IMR-90 (cell line): ENCODE measurements at regions of chr9 and their contacts with region 1.

Region 1: GRCh38 chr9:917730-918129 is 58.7 kb upstream of the DMRT3 start:
- DNase-seq: no peak
- ATAC-seq: no peak
- H3K4me3 ChIP-seq: no peak overlapping the region
- H3K27ac ChIP-seq: no peak overlapping the region
- H3K4me1 ChIP-seq: no peaks in the 10 kb centered on the region
- H3K27me3 ChIP-seq: no peaks in the 10 kb centered on the region
- CTCF ChIP-seq: no peak
- POLR2A ChIP-seq: no peak
- RAD21 ChIP-seq: no peak

Region 2: DNA sequence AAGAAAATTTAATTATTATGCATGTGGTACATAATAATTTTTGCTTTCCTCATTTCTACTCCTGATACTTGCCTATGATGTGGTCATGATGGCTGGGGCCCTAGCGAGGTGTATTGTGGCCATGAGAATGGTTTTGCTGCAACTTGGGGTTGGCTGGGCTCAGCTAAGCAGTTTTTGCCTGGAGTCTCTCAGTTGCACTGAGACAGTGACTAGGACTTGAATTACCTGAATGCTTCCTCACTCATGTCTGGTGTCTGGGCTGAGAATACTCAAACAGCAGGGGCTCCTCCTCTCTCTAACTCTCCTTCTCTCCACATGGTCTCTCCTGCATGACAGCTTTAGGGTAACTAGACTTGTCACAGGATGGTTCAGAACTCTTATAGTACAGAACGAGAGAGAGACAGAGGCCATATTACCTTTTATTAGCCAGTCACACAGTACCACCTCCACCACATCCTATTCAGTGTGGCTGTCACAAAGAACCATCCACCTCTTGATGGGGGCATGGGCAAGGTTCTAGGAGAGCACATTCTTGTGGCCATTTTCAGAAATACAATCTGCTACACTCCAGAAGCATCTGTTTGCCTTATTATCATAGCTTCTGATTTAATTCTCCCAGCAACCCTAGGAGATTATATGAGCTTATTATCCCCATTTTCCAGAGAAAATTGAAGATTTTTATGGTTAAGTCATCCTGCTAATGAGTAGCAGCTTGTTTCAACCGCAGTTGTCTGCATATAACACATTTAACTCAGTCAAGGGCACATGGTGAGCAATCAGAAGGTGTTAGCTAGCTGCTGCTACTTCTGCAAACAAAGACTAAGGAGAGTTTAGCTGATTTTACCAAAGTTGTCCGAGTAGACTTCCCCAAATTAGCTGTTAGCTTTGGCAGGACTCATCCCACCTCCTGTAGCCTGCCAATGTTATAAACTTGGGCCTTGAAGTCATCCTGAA is 458.0 kb before region 1 on chr9:
- CTCF ChIA-PET with region 1: no interaction called
- POLR2A ChIA-PET with region 1: no interaction called
- dilution Hi-C with region 1: no loop called
- in situ Hi-C with region 1: no loop called
- intact Hi-C with region 1: no loop called
- DNase-seq: no peak
- ATAC-seq: no peak
- H3K4me3 ChIP-seq: no peak overlapping the region
- H3K27ac ChIP-seq: no peak overlapping the region
- H3K4me1 ChIP-seq: no peaks in the 10 kb centered on the region
- H3K27me3 ChIP-seq: peaks cover 6% of the 10 kb centered on the region; the same call in 1 of the 2 replicates
- CTCF ChIP-seq: no peak
- POLR2A ChIP-seq: no peak
- RAD21 ChIP-seq: no peak

Region 3: DNA sequence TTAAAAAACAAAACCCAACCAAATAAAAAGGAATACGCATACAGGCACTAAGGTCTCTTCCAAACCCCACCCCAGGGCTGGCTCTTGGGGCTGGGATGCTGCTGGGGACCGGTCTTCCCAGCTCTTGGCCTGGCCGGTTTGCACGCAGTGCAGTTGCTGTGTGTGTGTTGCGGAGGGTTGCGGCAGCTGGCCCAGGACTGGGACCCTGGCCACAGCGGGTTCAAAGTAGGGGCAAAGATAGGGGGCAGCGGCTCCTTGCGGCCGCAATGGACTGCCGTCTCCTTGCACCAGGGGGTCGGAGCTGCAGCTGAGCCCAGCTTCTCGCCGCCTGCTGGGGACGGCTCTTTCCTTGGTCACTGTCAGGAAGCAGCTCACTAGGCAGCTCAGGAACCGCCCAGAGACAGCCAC is 63.8 kb after region 1 on chr9:
- CTCF ChIA-PET with region 1: no interaction called
- POLR2A ChIA-PET with region 1: no interaction called
- dilution Hi-C with region 1: no loop called
- in situ Hi-C with region 1: no loop called
- intact Hi-C with region 1: loop called (anchors 2 kb)
- DNase-seq: no peak
- ATAC-seq: no peak
- H3K4me3 ChIP-seq: no peak overlapping the region
- H3K27ac ChIP-seq: no peak overlapping the region
- H3K4me1 ChIP-seq: no peaks in the 10 kb centered on the region
- H3K27me3 ChIP-seq: peaks cover 55% of the 10 kb centered on the region
- CTCF ChIP-seq: no peak
- POLR2A ChIP-seq: no peak
- RAD21 ChIP-seq: no peak